Ovary (tissue), 10 donors: ENCODE measurements at regions of chr4 and their contacts with region 1.

Region 1: GRCh38 chr4:99405433-99406115 is 29.6 kb downstream of the ADH7 start:
- DNase-seq: peak; percentile 67 to 89 (median 76)
- H3K4me3 ChIP-seq: no peak overlapping the region
- H3K27ac ChIP-seq: peak overlapping the region in 1 of 2 donors; percentile 62
- H3K4me1 ChIP-seq: peaks cover 6% of the 10 kb centered on the region
- H3K27me3 ChIP-seq: no peaks in the 10 kb centered on the region
- CTCF ChIP-seq: peak; percentile 87 to 98 (median 97)
- EP300 ChIP-seq: no peak
- POLR2A ChIP-seq: no peak

Region 2: GRCh38 chr4:99088481-99089365 is 316.9 kb before region 1 on chr4 and contains the start of gene ADH5:
- intact Hi-C with region 1: loop called in 1 of 4 experiments (anchors 10 kb)
- DNase-seq: peak; percentile 86 to 92 (median 90)
- H3K4me3 ChIP-seq: peak within 1 kb of the TSS; percentile 56
- H3K27ac ChIP-seq: peak within 1 kb of the TSS; percentile 77 to 89
- H3K4me1 ChIP-seq: peaks cover 7% of the 10 kb centered on the region
- H3K27me3 ChIP-seq: no peaks in the 10 kb centered on the region
- CTCF ChIP-seq: no peak
- EP300 ChIP-seq: no peak
- POLR2A ChIP-seq: peak; percentile 62
- total RNA-seq, gene ADH5: 79.5 to 224 (median 148) TPM

Region 3: DNA sequence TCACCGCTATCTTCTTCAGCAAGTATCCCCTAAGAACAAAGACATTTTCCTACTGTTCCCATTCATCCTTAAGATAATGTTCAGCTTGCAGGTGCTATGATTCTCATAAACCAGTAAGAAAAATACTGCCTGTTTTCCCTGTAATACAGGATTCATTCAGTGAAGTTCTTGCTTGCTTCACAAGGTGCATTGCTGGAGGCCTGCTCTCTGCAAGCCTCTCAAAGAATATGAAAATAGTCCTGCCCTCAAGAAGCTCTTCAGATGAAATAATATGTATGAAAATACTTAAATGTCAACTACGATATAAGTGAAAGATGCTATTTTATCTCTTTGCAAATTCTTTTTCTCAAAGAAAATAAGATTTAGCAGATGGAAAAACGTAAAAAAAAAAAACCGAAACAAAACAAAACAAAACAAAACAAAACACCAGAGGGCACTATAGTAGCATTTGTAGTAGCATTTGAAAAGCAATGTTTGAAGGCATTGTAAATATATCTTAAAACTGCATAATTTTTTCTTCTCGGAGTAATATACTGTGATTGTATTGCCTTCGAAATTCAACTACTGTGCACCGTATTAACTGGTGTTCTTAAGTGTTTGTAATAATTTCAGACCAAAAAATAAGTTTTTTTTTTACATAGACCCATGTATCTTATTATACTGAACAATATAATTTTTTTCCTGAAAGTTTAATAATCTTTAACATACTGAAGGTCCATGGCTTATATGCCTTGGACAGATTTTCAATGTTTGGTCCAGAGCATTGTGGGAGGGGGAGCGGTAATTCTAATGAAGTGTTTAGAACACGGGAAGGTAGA is 287.5 kb before region 1 on chr4:
- intact Hi-C with region 1: loop called in 3 of 4 experiments (anchors 2 to 10 kb)
- DNase-seq: no peak
- H3K4me3 ChIP-seq: no peak overlapping the region
- H3K27ac ChIP-seq: no peak overlapping the region
- H3K4me1 ChIP-seq: no peaks in the 10 kb centered on the region
- H3K27me3 ChIP-seq: no peaks in the 10 kb centered on the region
- CTCF ChIP-seq: peak in 1 of 3 donors; percentile 21
- EP300 ChIP-seq: no peak
- POLR2A ChIP-seq: no peak

Region 4: GRCh38 chr4:99205153-99205979 is 200.2 kb before region 1 on chr4:
- intact Hi-C with region 1: loop called in 3 of 4 experiments (anchors 2 to 5 kb)
- DNase-seq: peak in 2 of 5 donors; percentile 16 to 47
- H3K4me3 ChIP-seq: no peak overlapping the region
- H3K27ac ChIP-seq: no peak overlapping the region
- H3K4me1 ChIP-seq: peaks cover 7% of the 10 kb centered on the region
- H3K27me3 ChIP-seq: no peaks in the 10 kb centered on the region
- CTCF ChIP-seq: no peak
- EP300 ChIP-seq: no peak
- POLR2A ChIP-seq: no peak

Region 5: GRCh38 chr4:99430111-99430510 is 24.5 kb after region 1 on chr4:
- intact Hi-C with region 1: no loop called
- DNase-seq: no peak
- H3K4me3 ChIP-seq: no peak overlapping the region
- H3K27ac ChIP-seq: no peak overlapping the region
- H3K4me1 ChIP-seq: no peaks in the 10 kb centered on the region
- H3K27me3 ChIP-seq: no peaks in the 10 kb centered on the region
- CTCF ChIP-seq: no peak
- EP300 ChIP-seq: no peak
- POLR2A ChIP-seq: no peak